Activated CD4-positive, alpha-beta T cell treated with anti-CD3 and anti-CD28 coated beads for 36 hours (primary cell): ENCODE measurements at regions of chr15 and their contacts with region 1.

Region 1: GRCh38 chr15:50908210-50909009 is at the start of gene AP4E1:
- DNase-seq: peak; percentile 96
- ATAC-seq: peak; percentile 62
- H3K4me3 Mint-ChIP-seq: peak within 1 kb of the TSS; percentile 87
- H3K27ac Mint-ChIP-seq: peak within 1 kb of the TSS; percentile 97
- H3K4me1 Mint-ChIP-seq: peaks cover 24% of the 10 kb centered on the region
- H3K27me3 Mint-ChIP-seq: no peaks in the 10 kb centered on the region
- total RNA-seq, gene AP4E1: 9.0 to 13.1 TPM

Region 2: DNA sequence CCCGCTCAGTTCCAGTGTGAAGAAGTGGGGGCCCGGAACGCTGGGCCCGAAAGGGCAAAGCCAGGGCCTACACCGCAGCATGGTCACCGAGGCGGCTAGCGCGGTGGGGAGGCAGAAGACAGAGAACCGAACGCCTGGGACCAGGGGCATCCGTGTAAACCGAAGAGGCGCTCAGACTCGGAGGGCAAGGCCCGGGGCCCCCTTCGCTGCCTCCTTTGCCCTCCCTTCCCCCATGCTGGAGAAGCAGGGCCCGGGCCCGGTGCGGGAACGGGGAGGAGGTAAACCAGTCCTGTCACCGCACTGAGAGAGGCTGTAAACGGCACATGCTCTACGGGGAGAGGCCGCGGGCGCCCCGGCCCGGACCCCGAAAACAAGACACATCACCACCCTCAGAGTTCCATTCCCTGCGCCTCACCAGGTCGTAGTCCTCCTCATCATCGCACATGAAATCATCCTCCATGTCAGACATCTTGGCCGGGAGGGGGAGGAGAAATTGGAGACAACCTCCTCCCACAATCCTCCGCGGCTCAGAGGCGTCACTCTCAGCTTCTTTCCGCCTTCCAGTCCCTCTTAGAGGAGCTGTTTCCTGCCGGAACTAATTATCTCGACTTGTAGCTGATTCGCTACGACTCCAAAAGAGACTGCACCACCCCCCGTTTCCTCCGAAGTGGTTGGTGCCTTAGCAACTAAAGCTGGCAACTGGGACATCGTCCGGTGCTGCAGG is 1753.1 kb before region 1 on chr15 and contains the start of gene COPS2:
- CTCF ChIA-PET with region 1: no interaction called
- POLR2A ChIA-PET with region 1: no interaction called
- intact Hi-C with region 1: loop called (anchors 2 to 5 kb)
- DNase-seq: peak; percentile 95
- ATAC-seq: peak; percentile 96
- H3K4me3 Mint-ChIP-seq: peak within 1 kb of the TSS; percentile 96
- H3K27ac Mint-ChIP-seq: peak within 1 kb of the TSS; percentile 94
- H3K4me1 Mint-ChIP-seq: peaks cover 37% of the 10 kb centered on the region
- H3K27me3 Mint-ChIP-seq: no peaks in the 10 kb centered on the region
- total RNA-seq, gene COPS2: 82.6 to 95.9 TPM

Region 3: GRCh38 chr15:50260969-50261496 is 647.4 kb before region 1 on chr15:
- CTCF ChIA-PET with region 1: no interaction called
- POLR2A ChIA-PET with region 1: no interaction called
- intact Hi-C with region 1: loop called in 1 of 2 experiments (anchors 1 kb)
- DNase-seq: no peak
- ATAC-seq: peak; percentile 17
- H3K4me3 Mint-ChIP-seq: peak overlapping the region; percentile 37
- H3K27ac Mint-ChIP-seq: peak overlapping the region; percentile 95
- H3K4me1 Mint-ChIP-seq: peaks cover 69% of the 10 kb centered on the region
- H3K27me3 Mint-ChIP-seq: no peaks in the 10 kb centered on the region

Region 4: DNA sequence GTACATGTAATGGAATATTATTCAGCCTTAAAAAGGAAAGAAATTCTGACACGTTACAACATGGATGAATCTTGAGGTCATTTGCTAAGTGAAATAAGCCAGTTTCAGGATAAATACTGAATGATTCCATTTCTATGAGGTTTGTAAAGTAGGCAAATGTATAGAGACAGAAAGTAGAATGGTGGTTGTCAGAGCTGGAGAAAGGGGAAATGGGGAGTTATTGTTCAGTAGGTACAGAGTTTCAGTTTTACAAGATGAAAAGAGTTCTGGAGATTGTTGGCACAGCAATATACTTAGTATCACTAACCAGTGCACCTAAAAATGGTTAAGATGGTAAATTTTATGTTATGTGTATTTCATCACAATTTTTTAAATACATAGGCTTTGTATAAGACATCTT is 423.6 kb before region 1 on chr15:
- CTCF ChIA-PET with region 1: no interaction called
- POLR2A ChIA-PET with region 1: no interaction called
- intact Hi-C with region 1: loop called in 1 of 2 experiments (anchors 1 kb)
- DNase-seq: no peak
- ATAC-seq: peak; percentile 52
- H3K4me3 Mint-ChIP-seq: no peak overlapping the region
- H3K27ac Mint-ChIP-seq: no peak overlapping the region
- H3K4me1 Mint-ChIP-seq: peaks cover 25% of the 10 kb centered on the region
- H3K27me3 Mint-ChIP-seq: no peaks in the 10 kb centered on the region

Region 5: GRCh38 chr15:50686468-50687301 is 221.7 kb before region 1 on chr15 and contains the start of gene TRPM7:
- CTCF ChIA-PET with region 1: no interaction called
- POLR2A ChIA-PET with region 1: interaction called, 5 read pairs
- intact Hi-C with region 1: loop called (anchors 1 kb)
- DNase-seq: peak; percentile 95
- ATAC-seq: peak; percentile 79
- H3K4me3 Mint-ChIP-seq: peak within 1 kb of the TSS; percentile 99
- H3K27ac Mint-ChIP-seq: peak within 1 kb of the TSS; percentile 97
- H3K4me1 Mint-ChIP-seq: peaks cover 49% of the 10 kb centered on the region
- H3K27me3 Mint-ChIP-seq: no peaks in the 10 kb centered on the region
- total RNA-seq, gene TRPM7: 40.7 to 41.4 TPM

Region 6: GRCh38 chr15:50883903-50884302 is 24.5 kb before region 1 on chr15:
- CTCF ChIA-PET with region 1: interaction called, 7 read pairs
- POLR2A ChIA-PET with region 1: no interaction called
- intact Hi-C with region 1: loop called (anchors 1 kb)
- DNase-seq: peak; percentile 26
- ATAC-seq: no peak
- H3K4me3 Mint-ChIP-seq: no peak overlapping the region
- H3K27ac Mint-ChIP-seq: peak overlapping the region; percentile 37
- H3K4me1 Mint-ChIP-seq: peaks cover 58% of the 10 kb centered on the region
- H3K27me3 Mint-ChIP-seq: no peaks in the 10 kb centered on the region

Region 7: GRCh38 chr15:52005748-52006701 is 1097.6 kb after region 1 on chr15:
- CTCF ChIA-PET with region 1: no interaction called
- POLR2A ChIA-PET with region 1: no interaction called
- intact Hi-C with region 1: loop called in 1 of 2 experiments (anchors 5 kb)
- DNase-seq: peak; percentile 54
- ATAC-seq: peak; percentile 90
- H3K4me3 Mint-ChIP-seq: peak overlapping the region; percentile 6
- H3K27ac Mint-ChIP-seq: peak overlapping the region; percentile 56
- H3K4me1 Mint-ChIP-seq: peaks cover 64% of the 10 kb centered on the region
- H3K27me3 Mint-ChIP-seq: no peaks in the 10 kb centered on the region